WTC11 (cell line): ENCODE measurements at regions of chr19 and their contacts with region 1.

Region 1: DNA sequence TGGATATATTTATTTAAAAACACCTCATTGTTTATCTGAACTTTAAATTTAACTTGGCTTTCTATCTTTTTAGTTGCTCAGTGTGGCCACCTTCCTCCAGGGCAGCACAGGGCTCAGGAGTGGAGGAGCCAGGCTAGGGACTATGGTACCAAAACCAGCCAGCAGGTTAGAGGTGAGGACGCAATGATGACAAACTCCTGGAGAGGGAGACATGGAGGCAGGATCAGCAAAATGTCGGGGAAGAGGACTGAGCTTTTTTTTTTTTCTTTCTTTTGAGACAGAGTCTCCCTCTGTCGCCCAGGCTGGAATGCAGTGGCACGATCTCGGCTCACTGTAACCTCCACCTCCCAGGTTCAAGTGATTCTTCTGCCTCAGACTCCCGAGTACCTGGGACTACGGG is 29.6 kb upstream of the CALM3 start:
- DNase-seq: peak; percentile 61
- ATAC-seq: peak; percentile 100
- H3K4me3 Mint-ChIP-seq: no peak overlapping the region
- H3K27ac Mint-ChIP-seq: no peak overlapping the region
- H3K4me1 Mint-ChIP-seq: peaks cover 6% of the 10 kb centered on the region; the same call in 1 of the 2 replicates
- H3K27me3 Mint-ChIP-seq: peaks cover 10% of the 10 kb centered on the region
- CTCF ChIP-seq: no peak

Region 2: DNA sequence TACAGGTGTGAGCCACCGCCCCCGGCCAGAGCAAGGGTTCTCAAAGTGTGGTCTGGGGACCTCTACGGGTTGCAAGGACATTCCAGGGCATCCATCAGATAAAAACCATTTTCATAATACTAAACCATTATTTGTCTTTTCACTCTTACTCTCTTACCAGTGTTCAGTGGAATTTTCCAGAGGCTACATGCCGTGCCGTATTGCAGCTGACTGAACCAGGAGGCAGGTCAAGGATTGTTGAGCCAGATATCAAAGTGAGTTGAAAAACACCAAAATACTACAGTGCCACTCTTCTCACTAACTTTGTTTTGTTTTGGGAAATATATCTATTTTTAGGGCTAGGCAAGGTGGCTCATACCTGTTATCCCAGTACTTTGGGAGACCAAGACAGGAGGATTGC is 68.6 kb before region 1 on chr19:
- CTCF ChIA-PET with region 1: no interaction called
- POLR2A ChIA-PET with region 1: no interaction called
- DNase-seq: no peak
- ATAC-seq: no peak
- H3K4me3 Mint-ChIP-seq: no peak overlapping the region
- H3K27ac Mint-ChIP-seq: no peak overlapping the region
- H3K4me1 Mint-ChIP-seq: no peaks in the 10 kb centered on the region
- H3K27me3 Mint-ChIP-seq: peaks cover 1% of the 10 kb centered on the region
- CTCF ChIP-seq: no peak

Region 3: GRCh38 chr19:46529622-46530462 is 41.7 kb before region 1 on chr19:
- CTCF ChIA-PET with region 1: interaction called, 21 read pairs
- POLR2A ChIA-PET with region 1: no interaction called
- DNase-seq: peak; percentile 81
- ATAC-seq: peak; percentile 48
- H3K4me3 Mint-ChIP-seq: peak overlapping the region; percentile 40
- H3K27ac Mint-ChIP-seq: peak overlapping the region; percentile 55; the same call in 1 of the 2 replicates
- H3K4me1 Mint-ChIP-seq: peaks cover 26% of the 10 kb centered on the region
- H3K27me3 Mint-ChIP-seq: peaks cover 3% of the 10 kb centered on the region; the same call in 1 of the 2 replicates
- CTCF ChIP-seq: peak; percentile 96

Region 4: GRCh38 chr19:46537136-46538097 is 34.1 kb before region 1 on chr19:
- CTCF ChIA-PET with region 1: interaction called, 19 read pairs
- POLR2A ChIA-PET with region 1: no interaction called
- DNase-seq: peak; percentile 83
- ATAC-seq: peak; percentile 89
- H3K4me3 Mint-ChIP-seq: no peak overlapping the region
- H3K27ac Mint-ChIP-seq: no peak overlapping the region
- H3K4me1 Mint-ChIP-seq: 0 out of 2 replicates have a peak, but pooled peaks cover 2% of the 10 kb centered on the region
- H3K27me3 Mint-ChIP-seq: peaks cover 5% of the 10 kb centered on the region
- CTCF ChIP-seq: peak; percentile 92

Region 5: GRCh38 chr19:46551164-46551563 is 20.4 kb before region 1 on chr19:
- CTCF ChIA-PET with region 1: no interaction called
- POLR2A ChIA-PET with region 1: no interaction called
- DNase-seq: no peak
- ATAC-seq: no peak
- H3K4me3 Mint-ChIP-seq: no peak overlapping the region
- H3K27ac Mint-ChIP-seq: no peak overlapping the region
- H3K4me1 Mint-ChIP-seq: peaks cover 4% of the 10 kb centered on the region
- H3K27me3 Mint-ChIP-seq: peaks cover 52% of the 10 kb centered on the region
- CTCF ChIP-seq: no peak